ENCODE measurements at regions of chr1 and their contacts with region 1.

Region 1: DNA sequence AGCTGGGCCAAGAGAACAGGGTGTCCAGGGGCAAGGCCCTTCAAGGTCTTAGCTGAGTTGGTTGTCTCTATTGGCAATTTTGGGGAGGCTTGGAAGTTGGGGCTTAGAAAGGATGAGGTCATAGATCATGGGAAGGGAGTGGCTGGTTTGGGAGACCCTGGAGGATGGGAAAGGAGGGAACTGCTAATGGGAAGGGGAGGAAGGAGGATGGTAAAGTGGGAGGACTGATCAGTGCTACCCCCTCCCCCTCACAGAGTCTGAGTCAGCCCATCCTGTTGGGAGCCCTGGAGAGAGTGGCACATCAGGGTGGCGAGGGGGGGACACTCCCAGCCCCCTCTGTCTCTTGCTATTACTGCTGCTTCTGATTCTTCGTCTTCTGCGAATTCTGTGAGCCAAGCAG is 5.1 kb downstream of the EFNA4 start:
- DNase-seq: no peak

Region 2: GRCh38 chr1:153465811-153466636 is 1602.6 kb before region 1 on chr1:
- intact Hi-C with region 1: no loop called
- DNase-seq: peak; percentile 89

Region 3: GRCh38 chr1:154141240-154141639 is 927.4 kb before region 1 on chr1:
- intact Hi-C with region 1: no loop called
- DNase-seq: no peak

Region 4: GRCh38 chr1:155056071-155056470 is 12.5 kb before region 1 on chr1:
- intact Hi-C with region 1: loop called in 1 of 2 experiments (anchors 1 kb)
- DNase-seq: no peak

Region 5: GRCh38 chr1:155117617-155118016 is 49.0 kb after region 1 on chr1:
- intact Hi-C with region 1: no loop called
- DNase-seq: no peak

Region 6: GRCh38 chr1:155250633-155251449 is 182.2 kb after region 1 on chr1:
- intact Hi-C with region 1: no loop called
- DNase-seq: peak; percentile 98

Measured in posterior vena cava (tissue), 2 donors.